Head of caudate nucleus (tissue), 42 donors: ENCODE measurements at regions of chr12 and their contacts with region 1.

Region 1: DNA sequence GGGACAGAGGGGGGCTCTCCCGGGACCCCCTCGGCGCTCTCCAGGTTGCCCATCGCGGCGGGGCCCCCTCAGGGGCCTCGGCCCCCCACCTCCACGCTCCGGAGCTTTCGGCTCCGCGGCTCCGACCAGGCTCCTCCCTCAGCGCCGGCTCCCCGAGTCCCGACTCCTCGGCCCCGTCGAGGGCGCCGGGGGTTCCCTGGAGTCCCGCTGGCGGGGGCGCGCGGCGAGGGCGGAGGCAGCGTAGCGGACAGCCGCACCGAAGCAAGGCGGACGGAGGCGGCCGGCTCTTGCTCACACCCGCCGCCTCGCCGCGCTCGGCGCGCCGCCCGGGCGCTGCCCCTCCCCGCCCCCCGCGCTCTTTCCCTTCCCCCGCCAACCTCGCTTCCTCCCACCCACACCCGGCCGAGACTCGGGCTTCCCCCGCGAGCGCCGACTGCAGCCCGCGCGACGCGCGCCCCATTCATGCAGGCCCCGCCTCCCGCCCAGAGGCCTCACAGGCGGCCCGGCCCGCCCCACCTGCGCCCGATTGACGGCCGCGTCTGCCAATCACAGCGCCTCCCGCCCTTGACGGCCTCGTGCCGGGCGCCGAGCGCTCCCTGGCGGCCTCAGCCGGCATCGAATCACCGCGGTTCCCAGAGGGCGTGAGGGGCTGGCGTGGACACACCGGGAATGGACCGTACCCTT is at the start of gene FMNL3:
- DNase-seq: peak; percentile 93 to 100 (median 99)

Region 2: GRCh38 chr12:49644620-49644994 is 62.7 kb before region 1 on chr12:
- intact Hi-C with region 1: loop called (anchors 2 kb)
- DNase-seq: peak; percentile 55 to 95 (median 87)

Region 3: DNA sequence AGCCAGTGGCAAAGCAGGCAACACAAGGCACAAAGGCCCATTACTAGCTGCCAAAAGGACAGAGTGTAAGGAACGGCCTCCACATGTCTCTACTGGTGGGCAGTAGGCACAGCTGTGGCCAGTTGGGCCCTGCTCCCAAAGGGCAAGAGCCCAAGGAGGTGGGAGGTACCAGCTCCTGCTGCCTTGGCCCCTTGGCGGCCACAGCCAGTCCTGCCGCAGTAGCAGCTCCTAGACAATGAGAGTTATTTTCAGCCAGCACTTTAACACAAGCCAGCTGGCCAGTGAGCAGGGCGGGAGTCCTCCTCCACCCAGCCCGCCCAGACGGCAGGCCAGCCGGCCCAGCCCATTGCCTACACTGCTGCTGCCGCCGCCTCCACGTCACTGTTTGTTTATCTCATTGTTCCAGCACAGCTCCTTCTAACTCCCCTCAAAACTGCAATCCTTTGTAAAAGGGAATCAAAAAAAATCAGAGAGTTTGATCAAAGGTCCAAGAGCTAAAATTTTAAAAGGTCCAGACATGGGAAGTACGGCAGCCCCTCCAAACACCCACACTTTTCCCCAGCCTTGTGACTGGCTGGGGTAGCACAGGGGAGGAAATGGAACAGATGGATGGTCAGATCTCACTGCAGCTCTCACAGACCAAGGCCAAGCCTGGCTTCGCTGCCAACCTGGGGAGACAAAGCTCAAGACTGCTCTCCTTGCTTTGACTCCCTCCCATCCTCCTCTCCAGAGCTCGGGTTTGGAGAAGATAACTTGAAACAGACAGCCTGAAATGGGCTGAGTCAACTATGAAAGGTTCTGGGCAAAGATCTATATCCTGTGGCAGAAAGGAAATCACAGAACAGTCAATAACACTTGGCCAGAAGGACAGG is 33.6 kb before region 1 on chr12:
- intact Hi-C with region 1: loop called (anchors 2 kb)
- DNase-seq: peak; percentile 83 to 98 (median 94)